Activated T-helper 2 cell treated with anti-CD3 and anti-CD28 coated beads, Interferon-gamma antibody, Interleukin-2, Interleukin-4, amounts not matched to agents 10 μg/mL and 5 μg/mL and 100 μg/mL, durations not matched to agents 14 hours and 24 hours and 36 hours (primary cell): ENCODE measurements at regions of chr9 and their contacts with region 1.

Region 1: DNA sequence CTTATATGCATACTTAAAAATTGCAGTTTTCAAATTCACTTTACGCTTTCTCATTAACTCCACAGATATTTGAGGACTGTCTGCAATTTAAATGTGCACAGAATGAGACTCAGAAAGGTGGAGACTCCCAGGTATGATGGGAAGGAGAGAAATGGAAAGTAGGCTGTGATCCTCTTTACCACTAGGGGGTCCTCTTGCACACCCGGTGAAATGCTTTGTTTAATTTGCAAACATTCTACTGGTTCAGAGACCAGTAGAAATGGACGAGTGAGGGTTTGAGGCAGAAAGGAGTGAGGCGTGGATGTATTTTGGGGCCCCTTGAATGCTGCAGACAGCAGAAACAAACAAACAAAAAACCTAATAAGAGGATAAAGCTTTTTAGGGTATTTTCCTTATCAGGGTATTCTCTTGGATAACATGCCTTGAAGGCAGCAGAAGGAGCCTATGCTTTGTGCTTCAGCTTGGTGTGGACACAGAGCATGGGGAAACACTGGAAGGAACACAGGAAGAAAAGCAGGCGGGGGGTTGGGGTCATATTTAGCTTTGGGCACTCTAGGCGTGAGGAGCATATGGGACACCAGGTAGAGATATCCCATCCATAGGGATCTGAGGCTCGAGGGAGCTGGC is 410.1 kb downstream of the DMRT2 start:
- DNase-seq: peak; percentile 8
- H3K4me3 Mint-ChIP-seq: no peak overlapping the region
- H3K27ac Mint-ChIP-seq: peak overlapping the region; percentile 6
- H3K4me1 Mint-ChIP-seq: peaks cover 10% of the 10 kb centered on the region
- H3K27me3 Mint-ChIP-seq: no peaks in the 10 kb centered on the region

Region 2: GRCh38 chr9:1604942-1605560 is 144.8 kb after region 1 on chr9:
- intact Hi-C with region 1: loop called (anchors 1 kb)
- DNase-seq: no peak
- H3K4me3 Mint-ChIP-seq: no peak overlapping the region
- H3K27ac Mint-ChIP-seq: no peak overlapping the region
- H3K4me1 Mint-ChIP-seq: no peaks in the 10 kb centered on the region
- H3K27me3 Mint-ChIP-seq: no peaks in the 10 kb centered on the region